Heart left ventricle (tissue), 16 donors: ENCODE measurements at regions of chr4 and their contacts with region 1.

Region 1: GRCh38 chr4:155179216-155179615 is 29.2 kb upstream of the NPY2R start:
- DNase-seq: no peak
- ATAC-seq: no peak
- H3K4me3 ChIP-seq: no peak overlapping the region
- H3K27ac ChIP-seq: no peak overlapping the region
- H3K4me1 ChIP-seq: no peaks in the 10 kb centered on the region
- H3K27me3 ChIP-seq: no peaks in the 10 kb centered on the region
- CTCF ChIP-seq: no peak
- POLR2A ChIP-seq: no peak

Region 2: DNA sequence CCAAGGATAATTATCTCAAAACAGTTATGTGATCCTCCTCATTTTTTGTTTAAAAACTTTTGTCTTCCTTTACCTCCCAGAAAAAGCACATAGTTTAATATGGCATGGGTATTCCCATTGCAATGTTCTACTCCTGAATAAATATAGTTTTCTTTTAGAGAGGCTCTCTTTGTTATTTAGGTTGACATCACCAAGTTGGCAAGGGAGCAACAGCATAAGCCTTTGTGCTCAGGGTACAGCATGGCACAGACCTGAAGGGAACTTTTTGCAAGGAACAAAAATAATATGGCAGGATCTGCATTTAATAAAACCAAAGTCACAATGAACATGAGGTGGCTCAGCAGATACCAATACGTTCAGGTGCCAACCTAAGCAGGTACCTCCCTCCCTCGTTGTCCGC is 17.9 kb before region 1 on chr4:
- intact Hi-C with region 1: loop called in 1 of 10 experiments (anchors 1 kb)
- DNase-seq: no peak
- ATAC-seq: no peak
- H3K4me3 ChIP-seq: no peak overlapping the region
- H3K27ac ChIP-seq: no peak overlapping the region
- H3K4me1 ChIP-seq: no peaks in the 10 kb centered on the region
- H3K27me3 ChIP-seq: no peaks in the 10 kb centered on the region
- CTCF ChIP-seq: no peak
- POLR2A ChIP-seq: no peak